HepG2 (cell line): ENCODE measurements at regions of chr1 and their contacts with region 1.

Region 1: GRCh38 chr1:196861429-196861828 is 26.4 kb upstream of the CFHR4 start:
- DNase-seq: no peak
- ATAC-seq: no peak
- H3K4me3 ChIP-seq: no peak overlapping the region
- H3K27ac ChIP-seq: no peak overlapping the region
- H3K4me1 ChIP-seq: no peaks in the 10 kb centered on the region
- H3K27me3 ChIP-seq: no peaks in the 10 kb centered on the region
- CTCF ChIP-seq: no peak
- EP300 ChIP-seq: no peak
- POLR2A ChIP-seq: no peak
- RAD21 ChIP-seq: no peak

Region 2: GRCh38 chr1:196797891-196798290 is 63.5 kb before region 1 on chr1:
- CTCF ChIA-PET with region 1: no interaction called
- POLR2A ChIA-PET with region 1: no interaction called
- in situ Hi-C with region 1: no loop called
- intact Hi-C with region 1: no loop called
- DNase-seq: no peak
- ATAC-seq: no peak
- H3K4me3 ChIP-seq: no peak overlapping the region
- H3K27ac ChIP-seq: no peak overlapping the region
- H3K4me1 ChIP-seq: no peaks in the 10 kb centered on the region
- H3K27me3 ChIP-seq: no peaks in the 10 kb centered on the region
- CTCF ChIP-seq: no peak
- EP300 ChIP-seq: no peak
- POLR2A ChIP-seq: no peak
- RAD21 ChIP-seq: no peak

Region 3: GRCh38 chr1:196897158-196897828 is 35.9 kb after region 1 on chr1:
- CTCF ChIA-PET with region 1: no interaction called
- POLR2A ChIA-PET with region 1: no interaction called
- in situ Hi-C with region 1: no loop called
- intact Hi-C with region 1: loop called (anchors 1 kb)
- DNase-seq: no peak
- ATAC-seq: peak; percentile 34; the same call in 1 of the 3 replicates
- H3K4me3 ChIP-seq: no peak overlapping the region
- H3K27ac ChIP-seq: no peak overlapping the region
- H3K4me1 ChIP-seq: no peaks in the 10 kb centered on the region
- H3K27me3 ChIP-seq: no peaks in the 10 kb centered on the region
- CTCF ChIP-seq: no peak
- EP300 ChIP-seq: no peak
- POLR2A ChIP-seq: no peak
- RAD21 ChIP-seq: no peak